CD4-positive, alpha-beta T cell (primary cell): ENCODE measurements at regions of chr2 and their contacts with region 1.

Region 1: DNA sequence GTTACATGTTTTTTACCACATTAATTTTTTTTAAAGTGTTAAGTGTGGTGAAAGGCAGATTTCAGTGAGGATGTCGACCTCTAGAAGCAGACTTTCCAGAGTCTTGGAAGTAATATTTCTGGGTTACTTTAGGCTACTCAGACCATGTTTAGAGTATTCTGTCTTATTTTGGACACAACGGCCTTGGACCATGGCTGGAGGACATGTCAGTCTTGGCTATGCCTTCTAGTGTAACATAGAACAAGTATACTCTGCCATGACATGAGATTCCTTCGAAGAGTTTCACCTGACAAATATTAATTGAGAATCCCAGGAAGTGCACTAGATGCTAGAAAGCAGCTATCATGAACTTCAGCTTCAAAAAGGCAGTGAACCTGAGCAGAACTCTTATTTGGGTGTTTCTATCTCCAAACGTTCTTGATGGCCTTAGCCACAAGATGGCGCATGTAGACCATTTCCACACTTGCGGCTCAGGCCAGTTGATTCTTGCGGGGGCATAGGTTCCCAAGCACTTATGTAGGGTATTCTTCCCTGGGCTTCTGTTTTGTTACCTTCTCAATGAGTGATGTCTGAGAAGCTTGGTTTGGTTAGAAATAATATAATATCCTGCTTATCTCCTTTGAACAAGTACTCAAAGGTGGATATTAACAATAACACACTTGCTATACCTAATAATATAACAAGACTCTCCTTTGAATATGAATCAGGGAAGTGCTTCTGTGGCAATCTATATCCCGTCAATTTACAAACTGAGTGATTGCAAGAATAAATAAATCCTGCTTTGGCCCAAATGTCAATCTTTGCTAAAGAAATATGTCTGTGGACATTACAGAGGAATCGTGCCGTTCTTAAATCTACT is 62.0 kb downstream of the CACNB4 start:
- DNase-seq: peak; percentile 12 to 72 (median 34)
- ATAC-seq: no peak
- H3K4me3 ChIP-seq: no peak overlapping the region
- H3K4me3 Mint-ChIP-seq: no peak overlapping the region
- H3K27ac ChIP-seq: no peak overlapping the region
- H3K27ac Mint-ChIP-seq: no peak overlapping the region
- H3K4me1 ChIP-seq: no peaks in the 10 kb centered on the region
- H3K4me1 Mint-ChIP-seq: no peaks in the 10 kb centered on the region
- H3K27me3 ChIP-seq: no peaks in the 10 kb centered on the region
- H3K27me3 Mint-ChIP-seq: no peaks in the 10 kb centered on the region
- CTCF ChIP-seq: peak; percentile 71

Region 2: GRCh38 chr2:152635635-152636298 is 598.9 kb after region 1 on chr2:
- CTCF ChIA-PET with region 1: no interaction called
- POLR2A ChIA-PET with region 1: no interaction called
- intact Hi-C with region 1: loop called (anchors 1 to 2 kb)
- DNase-seq: peak; percentile 36 to 79 (median 54)
- ATAC-seq: peak; percentile 52
- H3K4me3 ChIP-seq: no peak overlapping the region
- H3K4me3 Mint-ChIP-seq: no peak overlapping the region
- H3K27ac ChIP-seq: no peak overlapping the region
- H3K27ac Mint-ChIP-seq: no peak overlapping the region
- H3K4me1 ChIP-seq: peaks cover 4% of the 10 kb centered on the region
- H3K4me1 Mint-ChIP-seq: no peaks in the 10 kb centered on the region
- H3K27me3 ChIP-seq: no peaks in the 10 kb centered on the region
- H3K27me3 Mint-ChIP-seq: peaks cover 4% of the 10 kb centered on the region
- CTCF ChIP-seq: peak; percentile 91

Region 3: GRCh38 chr2:152740743-152741328 is 704.0 kb after region 1 on chr2:
- CTCF ChIA-PET with region 1: no interaction called
- POLR2A ChIA-PET with region 1: no interaction called
- intact Hi-C with region 1: loop called (anchors 5 to 10 kb)
- DNase-seq: peak in 3 of 14 experiments; percentile 67 to 69 (median 68)
- ATAC-seq: peak; percentile 94
- H3K4me3 ChIP-seq: no peak overlapping the region
- H3K4me3 Mint-ChIP-seq: no peak overlapping the region
- H3K27ac ChIP-seq: no peak overlapping the region
- H3K27ac Mint-ChIP-seq: no peak overlapping the region
- H3K4me1 ChIP-seq: no peaks in the 10 kb centered on the region
- H3K4me1 Mint-ChIP-seq: peaks cover 14% of the 10 kb centered on the region
- H3K27me3 ChIP-seq: no peaks in the 10 kb centered on the region
- H3K27me3 Mint-ChIP-seq: no peaks in the 10 kb centered on the region
- CTCF ChIP-seq: peak; percentile 96

Region 4: DNA sequence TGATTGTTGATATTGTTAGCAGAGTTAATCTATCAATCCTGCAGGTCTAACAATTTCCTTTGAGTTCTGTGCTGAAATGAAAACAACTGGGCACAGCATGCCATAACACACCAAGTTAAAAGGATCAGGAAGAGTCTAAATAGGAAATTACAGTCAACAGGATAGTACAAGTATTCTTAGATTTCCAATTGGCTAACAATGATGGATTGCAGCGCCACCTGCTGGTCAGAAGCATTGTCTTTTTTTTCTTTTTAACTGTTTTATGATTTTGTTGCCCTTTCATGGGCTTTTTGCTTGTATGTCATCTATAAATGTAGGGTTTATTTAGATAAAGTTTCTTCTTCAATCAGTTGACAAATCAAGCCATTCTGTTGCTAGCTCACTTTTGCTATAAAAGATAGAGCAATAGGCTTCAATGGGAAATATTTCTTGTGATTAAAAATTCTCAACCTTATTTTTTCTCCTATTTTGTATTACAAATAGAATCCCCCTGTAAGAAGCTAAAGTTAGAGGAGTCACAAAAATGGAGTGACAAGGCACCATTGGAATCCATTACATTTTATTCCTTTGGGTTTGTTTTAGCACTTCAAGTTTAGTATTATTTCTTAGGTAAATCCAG is 1482.5 kb after region 1 on chr2:
- CTCF ChIA-PET with region 1: no interaction called
- POLR2A ChIA-PET with region 1: no interaction called
- intact Hi-C with region 1: loop called in 1 of 2 experiments (anchors 2 kb)
- DNase-seq: peak in 12 of 14 experiments; percentile 7 to 62 (median 26)
- ATAC-seq: no peak
- H3K4me3 ChIP-seq: no peak overlapping the region
- H3K4me3 Mint-ChIP-seq: no peak overlapping the region
- H3K27ac ChIP-seq: no peak overlapping the region
- H3K27ac Mint-ChIP-seq: no peak overlapping the region
- H3K4me1 ChIP-seq: no peaks in the 10 kb centered on the region
- H3K4me1 Mint-ChIP-seq: no peaks in the 10 kb centered on the region
- H3K27me3 ChIP-seq: no peaks in the 10 kb centered on the region
- H3K27me3 Mint-ChIP-seq: peaks cover 5% of the 10 kb centered on the region
- CTCF ChIP-seq: peak; percentile 83